CD4-positive, alpha-beta memory T cell (primary cell): ENCODE measurements at regions of chr2 and their contacts with region 1.

Region 1: GRCh38 chr2:42102024-42102590 is 54.3 kb downstream of the PKDCC start:
- DNase-seq: peak; percentile 96 to 98 (median 96)
- H3K4me3 ChIP-seq: peak overlapping the region; percentile 53 to 64
- H3K4me3 Mint-ChIP-seq: peak overlapping the region in 7 of 8 donors; percentile 85 to 90 (median 87)
- H3K27ac ChIP-seq: peak overlapping the region; percentile 100
- H3K27ac Mint-ChIP-seq: no peak overlapping the region
- H3K4me1 ChIP-seq: peaks cover 94% of the 10 kb centered on the region
- H3K4me1 Mint-ChIP-seq: peaks cover 38 to 64% (median 51%) of the 10 kb centered on the region in 4 donors
- H3K27me3 ChIP-seq: no peaks in the 10 kb centered on the region
- H3K27me3 Mint-ChIP-seq: no peaks in the 10 kb centered on the region

Region 2: GRCh38 chr2:41990688-41991087 is 111.4 kb before region 1 on chr2:
- CTCF ChIA-PET with region 1: no interaction called
- POLR2A ChIA-PET with region 1: no interaction called
- intact Hi-C with region 1: no loop called
- DNase-seq: no peak
- H3K4me3 ChIP-seq: no peak overlapping the region
- H3K4me3 Mint-ChIP-seq: no peak overlapping the region
- H3K27ac ChIP-seq: no peak overlapping the region
- H3K27ac Mint-ChIP-seq: no peak overlapping the region
- H3K4me1 ChIP-seq: no peaks in the 10 kb centered on the region
- H3K4me1 Mint-ChIP-seq: peaks cover 0 to 1% (median 0%) of the 10 kb centered on the region in 4 donors
- H3K27me3 ChIP-seq: no peaks in the 10 kb centered on the region
- H3K27me3 Mint-ChIP-seq: peaks cover 5 to 12% of the 10 kb centered on the region in 2 donors

Region 3: GRCh38 chr2:42127425-42128424 is 25.6 kb after region 1 on chr2:
- CTCF ChIA-PET with region 1: interaction called, 173 read pairs
- POLR2A ChIA-PET with region 1: interaction called, 1,146 read pairs
- intact Hi-C with region 1: loop called (anchors 1 kb)
- DNase-seq: peak; percentile 61 to 71 (median 66)
- H3K4me3 ChIP-seq: peak overlapping the region in 1 of 2 donors; percentile 41
- H3K4me3 Mint-ChIP-seq: peak overlapping the region; percentile 36 to 81 (median 74)
- H3K27ac ChIP-seq: peak overlapping the region; percentile 52
- H3K27ac Mint-ChIP-seq: peak overlapping the region; percentile 88 to 100 (median 96)
- H3K4me1 ChIP-seq: peaks cover 97% of the 10 kb centered on the region
- H3K4me1 Mint-ChIP-seq: peaks cover 71 to 99% (median 88%) of the 10 kb centered on the region in 4 donors
- H3K27me3 ChIP-seq: no peaks in the 10 kb centered on the region
- H3K27me3 Mint-ChIP-seq: no peaks in the 10 kb centered on the region

Region 4: GRCh38 chr2:42150159-42150558 is 48.1 kb after region 1 on chr2:
- CTCF ChIA-PET with region 1: no interaction called
- POLR2A ChIA-PET with region 1: interaction called, 1,146 read pairs
- intact Hi-C with region 1: no loop called
- DNase-seq: no peak
- H3K4me3 ChIP-seq: no peak overlapping the region
- H3K4me3 Mint-ChIP-seq: no peak overlapping the region
- H3K27ac ChIP-seq: no peak overlapping the region
- H3K27ac Mint-ChIP-seq: peak overlapping the region in 3 of 7 donors; percentile 5 to 49 (median 43)
- H3K4me1 ChIP-seq: no peaks in the 10 kb centered on the region
- H3K4me1 Mint-ChIP-seq: peaks cover 5 to 14% (median 10%) of the 10 kb centered on the region in 4 donors
- H3K27me3 ChIP-seq: no peaks in the 10 kb centered on the region
- H3K27me3 Mint-ChIP-seq: no peaks in the 10 kb centered on the region

Region 5: GRCh38 chr2:42191285-42192009 is 89.3 kb after region 1 on chr2:
- CTCF ChIA-PET with region 1: interaction called, 128 read pairs
- POLR2A ChIA-PET with region 1: interaction called, 10 read pairs
- intact Hi-C with region 1: no loop called
- DNase-seq: no peak
- H3K4me3 ChIP-seq: no peak overlapping the region
- H3K4me3 Mint-ChIP-seq: peak overlapping the region in 6 of 8 donors; percentile 10 to 67 (median 38)
- H3K27ac ChIP-seq: no peak overlapping the region
- H3K27ac Mint-ChIP-seq: peak overlapping the region; percentile 36 to 94 (median 68)
- H3K4me1 ChIP-seq: peaks cover 93% of the 10 kb centered on the region
- H3K4me1 Mint-ChIP-seq: peaks cover 52 to 89% (median 68%) of the 10 kb centered on the region in 4 donors
- H3K27me3 ChIP-seq: no peaks in the 10 kb centered on the region
- H3K27me3 Mint-ChIP-seq: no peaks in the 10 kb centered on the region